ENCODE measurements at regions of chr5 and their contacts with region 1.

Region 1: GRCh38 chr5:68644971-68645370 is 429.4 kb downstream of the PIK3R1 start:
- DNase-seq: no peak
- H3K4me3 ChIP-seq: no peak overlapping the region
- H3K27ac ChIP-seq: no peak overlapping the region
- H3K4me1 ChIP-seq: peaks cover 8% of the 10 kb centered on the region; the same call in 1 of the 2 replicates
- H3K27me3 ChIP-seq: no peaks in the 10 kb centered on the region
- CTCF ChIP-seq: no peak

Region 2: GRCh38 chr5:68612972-68613371 is 32.0 kb before region 1 on chr5:
- CTCF ChIA-PET with region 1: no interaction called
- POLR2A ChIA-PET with region 1: no interaction called
- intact Hi-C with region 1: loop called (anchors 2 kb)
- DNase-seq: no peak
- H3K4me3 ChIP-seq: no peak overlapping the region
- H3K27ac ChIP-seq: no peak overlapping the region
- H3K4me1 ChIP-seq: no peaks in the 10 kb centered on the region
- H3K27me3 ChIP-seq: no peaks in the 10 kb centered on the region
- CTCF ChIP-seq: no peak